ENCODE measurements at regions of chr1 and their contacts with region 1.

Region 1: GRCh38 chr1:238916828-238917227 is 469.5 kb upstream of the CHRM3 start:
- DNase-seq: no peak
- ATAC-seq: no peak
- H3K4me3 ChIP-seq: no peak overlapping the region
- H3K27ac ChIP-seq: no peak overlapping the region
- H3K4me1 ChIP-seq: no peaks in the 10 kb centered on the region
- H3K27me3 ChIP-seq: no peaks in the 10 kb centered on the region
- CTCF ChIP-seq: no peak
- POLR2A ChIP-seq: no peak

Region 2: DNA sequence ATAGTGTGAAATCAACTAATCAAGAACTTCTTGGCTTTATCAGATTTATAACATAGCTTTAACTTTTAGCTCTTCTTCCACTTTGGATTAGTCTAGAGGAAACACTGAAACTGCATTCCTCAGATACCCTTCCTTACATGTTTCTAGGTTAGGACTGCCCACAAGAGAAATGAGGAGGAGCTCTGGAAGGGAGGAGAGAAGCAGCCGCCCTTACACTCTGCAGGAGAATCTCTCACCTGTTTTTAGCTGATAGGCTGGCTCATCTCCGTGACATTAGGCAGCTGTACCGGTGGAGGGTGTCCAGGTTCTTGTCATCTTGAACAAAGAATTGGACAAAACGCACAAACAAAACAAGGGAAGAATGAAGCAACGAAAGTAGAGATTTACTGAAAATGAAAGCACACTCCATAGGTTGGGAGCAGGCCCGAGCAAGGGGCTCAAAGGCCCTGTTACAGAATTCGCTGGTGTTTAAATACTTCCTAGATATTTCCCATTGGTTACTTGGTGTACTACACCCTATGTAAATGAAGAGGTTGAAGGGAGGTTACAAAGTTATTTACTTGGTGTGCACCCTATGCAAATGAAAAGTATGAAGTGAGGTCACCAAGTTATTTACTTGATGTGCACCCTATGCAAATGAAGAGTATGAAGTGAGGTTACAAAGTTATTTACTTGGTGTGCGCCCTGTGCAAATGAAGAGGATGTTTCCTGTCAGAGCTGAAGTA is 55.3 kb before region 1 on chr1:
- in situ Hi-C with region 1: loop called in 1 of 4 experiments (anchors 10 kb)
- intact Hi-C with region 1: no loop called
- DNase-seq: no peak
- ATAC-seq: no peak
- H3K4me3 ChIP-seq: no peak overlapping the region
- H3K27ac ChIP-seq: no peak overlapping the region
- H3K4me1 ChIP-seq: no peaks in the 10 kb centered on the region
- H3K27me3 ChIP-seq: no peaks in the 10 kb centered on the region
- CTCF ChIP-seq: no peak
- POLR2A ChIP-seq: no peak

Region 3: DNA sequence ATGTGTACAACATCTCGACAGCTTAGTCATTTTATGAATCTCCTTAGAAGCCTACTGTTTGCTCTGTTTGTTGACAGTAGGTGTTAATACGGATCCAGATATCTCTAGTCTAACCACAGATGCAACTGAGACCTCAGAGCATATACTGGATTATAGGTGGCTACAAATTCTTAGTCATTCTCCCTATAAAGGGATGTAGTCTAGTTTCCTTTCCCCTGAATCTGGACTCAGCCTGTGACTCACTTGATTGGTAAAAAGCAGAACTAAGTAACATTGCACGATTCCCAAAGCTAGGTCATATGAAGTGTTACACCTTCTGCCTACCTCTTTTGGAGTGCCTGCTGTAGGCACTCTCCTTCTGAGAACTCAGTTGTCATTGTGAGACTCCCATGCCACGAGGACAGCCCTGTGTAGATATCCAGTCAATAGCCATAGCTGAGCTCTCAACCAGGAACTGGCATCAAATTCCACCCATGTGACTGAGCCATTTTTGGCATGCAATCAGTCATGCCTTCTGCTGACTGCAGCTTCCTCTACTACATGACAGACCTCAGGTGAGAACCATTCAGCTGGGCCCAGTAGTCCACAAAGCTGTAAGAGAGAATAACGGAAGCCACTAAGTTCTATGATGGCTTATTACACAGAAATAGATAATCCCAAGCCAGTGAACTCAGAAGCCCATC is 333.7 kb after region 1 on chr1:
- in situ Hi-C with region 1: no loop called
- intact Hi-C with region 1: no loop called
- DNase-seq: no peak
- ATAC-seq: no peak
- H3K4me3 ChIP-seq: no peak overlapping the region
- H3K27ac ChIP-seq: no peak overlapping the region
- H3K4me1 ChIP-seq: no peaks in the 10 kb centered on the region
- H3K27me3 ChIP-seq: no peaks in the 10 kb centered on the region
- CTCF ChIP-seq: no peak
- POLR2A ChIP-seq: no peak

Measured in gastrocnemius medialis (tissue), 4 donors.